ENCODE measurements at regions of chr12 and their contacts with region 1.

Region 1: GRCh38 chr12:89051065-89051677 is 301.1 kb downstream of the DUSP6 start:
- DNase-seq: peak; percentile 77
- H3K4me3 ChIP-seq: no peak overlapping the region
- H3K27ac ChIP-seq: no peak overlapping the region
- H3K4me1 ChIP-seq: no peaks in the 10 kb centered on the region
- H3K27me3 ChIP-seq: no peaks in the 10 kb centered on the region

Region 2: GRCh38 chr12:88946372-88946997 is 104.7 kb before region 1 on chr12:
- in situ Hi-C with region 1: no loop called
- DNase-seq: peak; percentile 90
- H3K4me3 ChIP-seq: peak overlapping the region; percentile 35
- H3K27ac ChIP-seq: peak overlapping the region; percentile 73
- H3K4me1 ChIP-seq: peaks cover 31% of the 10 kb centered on the region
- H3K27me3 ChIP-seq: no peaks in the 10 kb centered on the region

Region 3: DNA sequence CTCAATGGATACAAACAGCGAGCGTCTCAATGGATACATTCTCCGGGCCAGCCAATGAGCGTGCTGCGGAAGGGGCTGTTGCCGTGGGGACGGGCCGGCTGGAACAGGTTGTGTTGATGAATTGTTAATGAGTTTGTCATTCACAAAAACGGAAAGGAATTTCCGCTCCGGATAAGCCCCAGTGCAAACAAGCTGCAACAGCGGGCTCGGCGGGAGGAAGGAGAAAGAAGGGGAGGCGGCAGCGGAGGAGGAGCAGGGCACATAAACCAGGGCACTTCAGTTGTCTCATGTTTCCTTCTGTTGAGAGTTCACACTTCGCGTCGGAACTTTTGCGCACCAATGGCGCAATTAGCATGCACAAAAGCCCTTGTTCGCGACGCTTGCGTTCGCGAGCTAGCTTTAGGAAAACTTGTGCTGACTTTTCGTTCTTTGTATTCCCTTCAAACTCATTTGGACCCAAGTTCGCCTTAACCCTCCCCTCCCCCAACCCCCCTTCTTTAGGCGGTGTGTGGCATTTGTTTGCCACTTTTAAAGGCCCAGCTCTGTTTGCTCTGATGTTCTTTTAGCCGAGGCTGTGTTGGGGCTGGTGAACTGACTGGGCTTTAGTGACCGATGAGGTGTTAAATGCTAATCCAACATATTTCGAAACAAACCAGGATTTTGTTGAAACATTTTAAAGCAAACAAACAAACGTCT is 301.5 kb after region 1 on chr12 and contains the start of gene DUSP6:
- in situ Hi-C with region 1: loop called (anchors 10 kb)
- DNase-seq: peak; percentile 99
- H3K4me3 ChIP-seq: peak within 1 kb of the TSS; percentile 89
- H3K27ac ChIP-seq: peak within 1 kb of the TSS; percentile 96
- H3K4me1 ChIP-seq: peaks cover 19% of the 10 kb centered on the region
- H3K27me3 ChIP-seq: no peaks in the 10 kb centered on the region
- total RNA-seq, gene DUSP6: 81.9 and 112 TPM in 2 replicates

Measured in GM23248 (cell line).